ENCODE measurements at regions of chr3 and their contacts with region 1.

Region 1: DNA sequence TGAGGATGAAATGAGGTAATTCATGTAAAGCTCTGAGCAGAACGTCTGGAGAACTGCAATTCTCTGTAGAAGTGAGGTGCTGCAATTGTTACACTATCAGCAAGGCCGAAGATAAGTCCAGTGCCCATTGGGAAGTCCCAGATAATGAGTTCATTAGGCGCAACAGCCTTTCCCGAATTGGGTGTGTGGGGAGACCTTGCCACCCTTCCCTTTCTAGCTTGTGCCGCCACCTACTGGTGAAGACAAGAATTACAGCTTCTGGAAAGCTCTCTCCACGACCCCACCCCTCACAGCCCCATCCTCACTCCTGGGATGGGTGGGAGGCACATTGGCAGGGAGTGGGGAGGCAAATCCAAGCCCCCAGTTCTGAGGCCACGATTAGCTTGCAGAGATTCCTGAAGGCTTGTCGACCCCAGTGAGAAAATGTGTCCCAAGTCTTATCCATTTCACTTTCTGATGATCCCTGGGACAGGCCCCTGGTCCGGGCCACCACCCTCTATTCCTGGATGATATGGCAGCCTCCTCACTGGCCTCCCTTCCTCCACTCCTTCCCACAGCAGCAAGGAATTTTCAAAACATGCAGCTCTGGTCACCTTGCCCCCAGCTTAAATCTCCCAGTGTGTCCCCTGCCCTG is 36.4 kb downstream of the FAM3D start:
- DNase-seq: peak; percentile 75
- H3K4me3 Mint-ChIP-seq: no peak overlapping the region
- H3K27ac Mint-ChIP-seq: no peak overlapping the region
- H3K4me1 Mint-ChIP-seq: peaks cover 5% of the 10 kb centered on the region
- H3K27me3 Mint-ChIP-seq: no peaks in the 10 kb centered on the region
- CTCF ChIP-seq: peak; percentile 94

Region 2: DNA sequence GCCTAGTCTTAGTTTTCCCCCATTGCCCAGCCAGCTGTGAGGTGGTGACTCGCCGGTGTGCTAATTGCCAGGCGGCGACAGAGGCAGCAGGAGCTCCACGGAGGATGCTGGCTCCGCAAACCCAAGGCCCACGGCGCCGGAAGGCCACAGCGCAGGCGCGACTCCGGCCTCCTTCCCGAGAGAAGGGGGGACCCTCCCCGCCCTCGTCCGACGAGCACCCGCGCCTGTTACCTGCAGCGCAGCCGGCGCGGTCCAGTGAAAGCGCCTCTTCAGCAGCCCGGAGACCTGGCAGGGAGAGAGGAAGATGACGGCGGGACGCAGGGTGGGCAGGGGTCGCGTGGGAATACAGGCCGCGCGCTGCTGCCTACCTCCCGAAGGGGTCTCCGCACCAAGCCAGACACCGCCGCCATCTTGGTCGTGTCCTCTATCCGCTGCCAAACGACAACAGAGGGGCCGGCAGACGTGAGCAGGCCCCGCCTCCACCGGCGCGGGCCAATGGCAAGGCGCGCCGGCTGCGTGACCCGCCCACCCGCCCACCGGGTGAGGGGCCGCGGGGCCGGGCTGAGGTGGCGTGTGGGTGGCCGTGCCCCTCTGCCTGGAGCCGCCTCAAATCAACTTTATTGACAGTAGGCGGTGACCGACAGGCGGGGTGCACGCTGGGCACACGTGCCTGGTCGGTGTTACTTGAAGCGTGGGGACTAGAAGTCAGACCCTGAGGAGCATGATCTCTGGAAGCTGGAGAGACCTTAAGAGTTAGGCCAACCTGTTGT is 196.6 kb before region 1 on chr3 and contains the start of gene PDHB:
- CTCF ChIA-PET with region 1: interaction called, 4 read pairs
- POLR2A ChIA-PET with region 1: no interaction called
- intact Hi-C with region 1: loop called (anchors 1 kb)
- DNase-seq: peak; percentile 87
- H3K4me3 Mint-ChIP-seq: peak within 1 kb of the TSS; percentile 93
- H3K27ac Mint-ChIP-seq: peak within 1 kb of the TSS; percentile 40
- H3K4me1 Mint-ChIP-seq: peaks cover 21% of the 10 kb centered on the region
- H3K27me3 Mint-ChIP-seq: no peaks in the 10 kb centered on the region
- CTCF ChIP-seq: no peak
- total RNA-seq, gene PDHB: 52.2 and 62.2 TPM in 2 replicates

Region 3: GRCh38 chr3:58560771-58561311 is 69.4 kb before region 1 on chr3:
- CTCF ChIA-PET with region 1: interaction called, 358 read pairs
- POLR2A ChIA-PET with region 1: no interaction called
- intact Hi-C with region 1: loop called (anchors 2 kb)
- DNase-seq: peak; percentile 67
- H3K4me3 Mint-ChIP-seq: no peak overlapping the region
- H3K27ac Mint-ChIP-seq: no peak overlapping the region
- H3K4me1 Mint-ChIP-seq: peaks cover 20% of the 10 kb centered on the region
- H3K27me3 Mint-ChIP-seq: peaks cover 4% of the 10 kb centered on the region
- CTCF ChIP-seq: peak; percentile 11

Region 4: DNA sequence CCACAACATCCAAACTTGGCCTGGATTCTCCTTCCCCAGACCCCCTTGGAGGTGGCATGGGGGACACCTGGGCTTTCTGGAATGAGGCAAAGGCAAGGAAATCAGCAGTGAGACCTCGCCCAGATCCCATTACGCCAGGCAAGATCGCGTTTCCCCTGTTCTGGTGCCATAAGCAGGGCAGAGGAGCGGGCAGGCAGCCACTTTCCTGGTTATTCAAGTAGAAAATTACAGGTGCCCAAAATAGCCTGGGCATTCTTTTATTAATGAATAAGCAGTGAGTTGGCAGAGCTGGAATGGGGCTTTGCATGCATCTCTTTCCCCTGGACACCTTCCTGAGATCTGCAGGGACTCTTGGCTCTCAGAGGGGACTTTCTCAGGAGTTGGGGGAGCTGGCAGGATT is 21.5 kb before region 1 on chr3:
- CTCF ChIA-PET with region 1: interaction called, 16 read pairs
- POLR2A ChIA-PET with region 1: no interaction called
- intact Hi-C with region 1: no loop called
- DNase-seq: no peak
- H3K4me3 Mint-ChIP-seq: no peak overlapping the region
- H3K27ac Mint-ChIP-seq: no peak overlapping the region
- H3K4me1 Mint-ChIP-seq: no peaks in the 10 kb centered on the region
- H3K27me3 Mint-ChIP-seq: peaks cover 24% of the 10 kb centered on the region
- CTCF ChIP-seq: no peak

Region 5: DNA sequence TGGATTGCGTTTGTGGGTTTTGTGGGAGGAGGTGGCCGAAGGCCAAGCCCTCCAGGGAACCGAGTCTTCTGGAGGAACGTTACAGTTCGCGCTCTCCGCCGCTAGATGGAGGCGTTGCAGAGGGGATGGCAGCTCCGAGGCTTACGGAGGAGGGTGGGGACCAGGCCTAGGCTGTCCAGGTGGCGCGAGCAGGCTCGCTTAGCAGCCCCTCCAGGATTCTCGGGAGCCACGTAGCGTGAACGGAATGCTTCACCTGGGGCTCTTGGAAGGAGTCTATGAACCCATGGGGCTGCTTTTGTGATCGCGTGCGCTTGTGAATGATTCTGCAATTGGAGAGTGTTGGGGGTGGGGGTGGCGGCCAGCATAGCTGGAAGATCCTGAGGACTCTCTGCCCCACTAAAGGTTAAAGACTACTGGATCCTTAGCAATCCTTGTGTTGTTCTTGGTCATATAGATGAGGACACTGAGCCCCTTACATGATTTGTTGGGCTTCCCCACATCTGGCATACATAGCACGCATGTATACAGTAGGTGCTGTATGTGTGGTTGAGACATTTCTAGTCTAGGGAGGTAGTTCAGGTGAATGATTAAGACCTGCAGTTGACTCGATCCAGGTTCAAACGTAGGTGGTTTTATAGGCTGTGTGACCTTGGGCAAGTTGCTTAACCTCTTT is 10.6 kb after region 1 on chr3:
- CTCF ChIA-PET with region 1: interaction called, 80 read pairs
- POLR2A ChIA-PET with region 1: no interaction called
- intact Hi-C with region 1: no loop called
- DNase-seq: peak; percentile 83
- H3K4me3 Mint-ChIP-seq: no peak overlapping the region
- H3K27ac Mint-ChIP-seq: no peak overlapping the region
- H3K4me1 Mint-ChIP-seq: peaks cover under 1% of the 10 kb centered on the region
- H3K27me3 Mint-ChIP-seq: no peaks in the 10 kb centered on the region
- CTCF ChIP-seq: peak; percentile 93

Region 6: GRCh38 chr3:58848826-58849225 is 218.6 kb after region 1 on chr3:
- CTCF ChIA-PET with region 1: no interaction called
- POLR2A ChIA-PET with region 1: no interaction called
- intact Hi-C with region 1: no loop called
- DNase-seq: no peak
- H3K4me3 Mint-ChIP-seq: no peak overlapping the region
- H3K27ac Mint-ChIP-seq: no peak overlapping the region
- H3K4me1 Mint-ChIP-seq: no peaks in the 10 kb centered on the region
- H3K27me3 Mint-ChIP-seq: no peaks in the 10 kb centered on the region
- CTCF ChIP-seq: no peak

Measured in MCF 10A (cell line).